ENCODE measurements at regions of chr14 and their contacts with region 1.

Region 1: GRCh38 chr14:103552011-103552845 is 10.2 kb downstream of the BAG5 start:
- DNase-seq: peak; percentile 55 to 83
- ATAC-seq: peak; percentile 65 to 72
- H3K4me3 ChIP-seq: peak overlapping the region in 1 of 4 donors; percentile 40
- H3K27ac ChIP-seq: peak overlapping the region; percentile 74 to 97 (median 86)
- H3K4me1 ChIP-seq: peaks cover 46 to 74% of the 10 kb centered on the region in 2 donors
- H3K27me3 ChIP-seq: no peaks in the 10 kb centered on the region
- CTCF ChIP-seq: no peak
- POLR2A ChIP-seq: no peak

Region 2: DNA sequence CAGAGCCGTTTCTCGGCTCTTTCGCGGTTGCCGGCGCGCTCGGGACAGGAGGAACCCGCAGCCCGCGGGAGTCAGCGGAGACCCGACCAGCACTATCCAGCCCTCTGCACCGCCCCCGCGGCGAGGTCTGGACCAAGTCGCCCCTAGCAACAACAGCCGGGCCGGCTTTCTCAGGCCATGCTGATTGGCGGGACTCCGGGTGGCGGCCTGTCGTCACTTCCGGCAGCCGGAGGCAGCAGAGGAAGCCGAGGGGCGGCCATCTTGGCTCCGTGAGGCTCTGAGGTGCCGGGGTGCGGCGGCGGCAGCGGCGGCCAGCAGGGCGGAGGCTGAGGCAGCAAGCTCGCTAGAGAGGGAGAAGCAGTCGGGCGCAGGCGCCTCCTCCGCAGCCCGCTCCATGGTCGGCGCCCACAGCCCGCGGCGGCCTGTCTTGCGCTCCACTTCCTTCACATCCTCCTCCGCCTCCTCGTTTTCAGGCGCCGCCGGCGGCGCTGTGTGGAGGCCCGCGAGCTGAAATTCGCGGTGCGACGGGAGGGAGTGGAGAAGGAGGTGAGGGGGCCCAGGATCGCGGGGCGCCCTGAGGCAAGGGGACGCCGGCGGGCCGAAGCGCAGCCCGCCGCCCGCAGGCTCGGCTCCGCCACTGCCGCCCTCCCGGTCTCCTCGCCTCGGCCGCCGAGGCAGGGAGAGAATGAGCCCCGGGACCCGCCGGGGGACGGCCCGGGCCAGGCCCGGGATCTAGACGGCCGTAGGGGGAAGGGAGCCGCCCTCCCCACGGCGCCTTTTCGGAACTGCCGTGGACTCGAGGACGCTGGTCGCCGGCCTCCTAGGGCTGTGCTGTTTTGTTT is 166.9 kb before region 1 on chr14 and contains the start of gene MARK3:
- in situ Hi-C with region 1: no loop called
- intact Hi-C with region 1: loop called (anchors 5 kb)
- DNase-seq: peak; percentile 95 to 96
- ATAC-seq: peak; percentile 90
- H3K4me3 ChIP-seq: peak within 1 kb of the TSS; percentile 78 to 100 (median 87)
- H3K27ac ChIP-seq: peak within 1 kb of the TSS; percentile 94 to 100 (median 98)
- H3K4me1 ChIP-seq: peaks cover 25% of the 10 kb centered on the region in 2 donors
- H3K27me3 ChIP-seq: no peaks in the 10 kb centered on the region
- CTCF ChIP-seq: peak; percentile 33 to 50 (median 36)
- POLR2A ChIP-seq: peak; percentile 93 to 96
- total RNA-seq, gene MARK3: 60.2 to 73.1 (median 71.6) TPM

Region 3: GRCh38 chr14:103463149-103463548 is 89.1 kb before region 1 on chr14:
- in situ Hi-C with region 1: no loop called
- intact Hi-C with region 1: no loop called
- DNase-seq: no peak
- ATAC-seq: no peak
- H3K4me3 ChIP-seq: no peak overlapping the region
- H3K27ac ChIP-seq: no peak overlapping the region
- H3K4me1 ChIP-seq: no peaks in the 10 kb centered on the region
- H3K27me3 ChIP-seq: no peaks in the 10 kb centered on the region
- CTCF ChIP-seq: no peak
- POLR2A ChIP-seq: no peak

Measured in gastrocnemius medialis (tissue), 4 donors.